ENCODE measurements at regions of chr3 and their contacts with region 1.

Region 1: GRCh38 chr3:155854141-155854940 is at the start of gene SLC33A1:
- DNase-seq: peak; percentile 99
- ATAC-seq: peak; percentile 94
- H3K4me3 Mint-ChIP-seq: peak within 1 kb of the TSS; percentile 91
- H3K27ac Mint-ChIP-seq: peak within 1 kb of the TSS; percentile 99
- H3K4me1 Mint-ChIP-seq: peaks cover 32% of the 10 kb centered on the region
- H3K27me3 Mint-ChIP-seq: no peaks in the 10 kb centered on the region
- total RNA-seq, gene SLC33A1: 20.0 to 20.2 TPM

Region 2: DNA sequence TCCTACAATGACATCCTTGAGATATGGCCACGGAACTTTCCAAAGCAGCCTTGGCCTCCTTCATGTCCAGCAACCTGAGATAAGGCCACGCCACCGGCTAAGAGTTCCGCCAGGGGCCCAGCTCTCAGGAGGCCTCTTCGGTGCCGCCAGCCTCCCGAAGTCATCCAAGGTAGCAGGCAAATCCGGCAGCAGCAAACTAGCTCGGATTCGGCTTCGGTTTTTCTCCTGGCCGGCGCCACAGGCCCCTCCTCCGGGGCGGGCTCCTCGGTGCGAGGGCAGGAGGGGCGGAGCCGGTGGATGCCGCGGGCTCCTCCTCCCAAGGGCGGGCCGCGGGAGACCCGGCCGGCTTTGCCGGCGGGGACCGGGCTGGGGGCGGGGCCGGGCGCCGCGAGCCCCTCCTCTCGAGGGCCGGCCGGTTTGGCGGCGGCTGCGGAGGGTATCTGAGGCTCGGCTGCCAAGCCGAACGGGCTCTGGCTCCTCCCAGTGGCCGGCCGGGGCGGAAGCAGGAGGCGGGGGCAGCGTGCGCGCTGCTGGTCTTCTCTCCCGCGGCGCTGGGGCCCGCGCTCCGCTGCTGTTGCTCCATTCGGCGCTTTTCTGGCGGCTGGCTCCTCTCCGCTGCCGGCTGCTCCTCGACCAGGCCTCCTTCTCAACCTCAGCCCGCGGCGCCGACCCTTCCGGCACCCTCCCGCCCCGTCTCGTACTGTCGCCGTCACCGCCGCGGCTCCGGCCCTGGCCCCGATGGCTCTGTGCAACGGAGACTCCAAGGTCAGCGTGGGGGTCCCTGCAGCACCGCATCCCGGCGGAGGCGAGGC is 16.0 kb after region 1 on chr3 and contains the start of gene GMPS:
- CTCF ChIA-PET with region 1: interaction called, 8 read pairs
- POLR2A ChIA-PET with region 1: interaction called, 63 read pairs
- DNase-seq: peak; percentile 95
- ATAC-seq: peak; percentile 93
- H3K4me3 Mint-ChIP-seq: peak within 1 kb of the TSS; percentile 95
- H3K27ac Mint-ChIP-seq: peak within 1 kb of the TSS; percentile 94
- H3K4me1 Mint-ChIP-seq: peaks cover 27% of the 10 kb centered on the region
- H3K27me3 Mint-ChIP-seq: no peaks in the 10 kb centered on the region
- total RNA-seq, gene GMPS: 102 to 109 TPM